ENCODE measurements at regions of chr4 and their contacts with region 1.

Region 1: GRCh38 chr4:85474818-85475630 is at the start of gene ARHGAP24:
- DNase-seq: peak; percentile 82 to 83
- ATAC-seq: peak; percentile 95 to 99 (median 98)
- H3K4me3 ChIP-seq: peak within 1 kb of the TSS; percentile 26 to 82 (median 69)
- H3K27ac ChIP-seq: peak within 1 kb of the TSS; percentile 30 to 87 (median 84)
- H3K4me1 ChIP-seq: peaks cover 0 to 25% (median 8%) of the 10 kb centered on the region in 9 donors
- H3K27me3 ChIP-seq: no peaks in the 10 kb centered on the region
- CTCF ChIP-seq: peak in 2 of 9 donors; percentile 26 to 27
- total RNA-seq, gene ARHGAP24: 13.7 to 35.5 (median 25.0) TPM

Region 2: DNA sequence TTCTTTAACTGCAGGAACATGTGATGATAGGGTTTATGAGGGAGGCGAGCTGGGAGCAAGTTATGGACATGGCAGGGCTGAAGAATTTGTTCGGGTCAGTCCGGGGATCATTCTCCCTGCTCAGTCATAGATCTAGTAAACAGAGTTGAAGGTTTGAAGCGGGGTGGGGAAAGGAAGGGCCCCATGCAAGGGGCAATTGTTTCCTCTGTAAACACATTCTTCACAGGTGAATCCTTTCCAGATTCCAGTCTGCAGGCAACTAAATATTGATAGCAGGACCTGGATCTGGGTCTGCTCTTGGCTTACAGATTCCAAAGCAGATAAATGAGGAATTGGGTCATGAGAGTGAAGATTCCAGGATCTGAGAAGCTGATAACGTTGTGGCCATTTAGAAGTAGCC is 44.3 kb before region 1 on chr4:
- intact Hi-C with region 1: loop called in 1 of 10 experiments (anchors 5 kb)
- DNase-seq: no peak
- ATAC-seq: no peak
- H3K4me3 ChIP-seq: no peak overlapping the region
- H3K27ac ChIP-seq: no peak overlapping the region
- H3K4me1 ChIP-seq: peaks cover 0 to 17% (median 7%) of the 10 kb centered on the region in 9 donors
- H3K27me3 ChIP-seq: no peaks in the 10 kb centered on the region
- CTCF ChIP-seq: no peak

Region 3: DNA sequence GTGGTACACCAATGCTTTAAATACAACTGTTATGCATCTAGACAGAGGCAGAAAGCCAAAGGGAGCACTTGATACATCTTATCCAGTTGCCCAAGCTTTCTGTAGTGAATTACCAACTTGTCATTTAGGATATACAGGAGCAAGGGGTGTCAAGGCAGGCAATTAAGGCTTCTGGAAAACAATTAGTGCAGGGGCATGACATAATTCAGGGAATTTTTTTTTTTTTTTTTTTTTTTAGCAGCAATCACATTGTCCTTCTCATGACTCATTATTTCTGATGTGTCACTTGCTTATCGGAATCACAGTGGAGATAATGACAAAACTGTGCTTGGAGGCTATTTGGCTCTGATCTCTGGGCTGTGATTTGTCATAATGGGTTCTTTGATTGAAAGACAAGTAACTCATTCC is 259.4 kb after region 1 on chr4:
- intact Hi-C with region 1: loop called in 1 of 10 experiments (anchors 10 kb)
- DNase-seq: no peak
- ATAC-seq: peak in 7 of 8 donors; percentile 65 to 85 (median 80)
- H3K4me3 ChIP-seq: no peak overlapping the region
- H3K27ac ChIP-seq: peak overlapping the region in 7 of 10 donors; percentile 26 to 84 (median 57)
- H3K4me1 ChIP-seq: peaks cover 0 to 51% (median 18%) of the 10 kb centered on the region in 9 donors
- H3K27me3 ChIP-seq: no peaks in the 10 kb centered on the region
- CTCF ChIP-seq: no peak